Activated CD8-positive, alpha-beta T cell treated with anti-CD3 and anti-CD28 coated beads for 36 hours (primary cell): ENCODE measurements at regions of chr16 and their contacts with region 1.

Region 1: DNA sequence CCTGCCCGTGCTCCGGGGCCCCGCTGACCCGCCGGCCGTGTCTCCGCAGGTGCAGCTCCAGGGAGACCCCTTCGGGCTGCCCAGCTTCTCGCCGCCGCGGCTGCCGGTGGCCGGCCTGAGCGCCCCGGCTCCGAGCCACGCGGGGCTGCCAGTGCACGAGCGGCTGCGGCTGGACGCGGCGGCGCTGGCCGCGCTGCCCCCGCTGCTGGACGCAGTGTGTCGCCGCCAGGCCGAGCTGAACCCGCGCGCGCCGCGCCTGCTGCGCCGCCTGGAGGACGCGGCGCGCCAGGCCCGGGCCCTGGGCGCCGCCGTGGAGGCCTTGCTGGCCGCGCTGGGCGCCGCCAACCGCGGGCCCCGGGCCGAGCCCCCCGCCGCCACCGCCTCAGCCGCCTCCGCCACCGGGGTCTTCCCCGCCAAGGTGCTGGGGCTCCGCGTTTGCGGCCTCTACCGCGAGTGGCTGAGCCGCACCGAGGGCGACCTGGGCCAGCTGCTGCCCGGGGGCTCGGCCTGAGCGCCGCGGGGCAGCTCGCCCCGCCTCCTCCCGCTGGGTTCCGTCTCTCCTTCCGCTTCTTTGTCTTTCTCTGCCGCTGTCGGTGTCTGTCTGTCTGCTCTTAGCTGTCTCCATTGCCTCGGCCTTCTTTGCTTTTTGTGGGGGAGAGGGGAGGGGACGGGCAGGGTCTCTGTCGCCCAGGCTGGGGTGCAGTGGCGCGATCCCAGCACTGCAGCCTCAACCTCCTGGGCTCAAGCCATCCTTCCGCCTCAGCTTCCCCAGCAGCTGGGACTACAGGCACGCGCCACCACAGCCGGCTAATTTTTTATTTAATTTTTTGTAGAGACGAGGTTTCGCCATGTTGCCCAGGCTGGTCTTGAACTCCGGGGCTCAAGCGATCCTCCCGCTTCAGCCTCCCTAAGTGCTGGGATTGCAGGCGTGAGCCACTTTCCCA is 5.9 kb downstream of the CTF1 start:
- DNase-seq: peak; percentile 62
- ATAC-seq: peak; percentile 77
- H3K4me3 Mint-ChIP-seq: peak overlapping the region; percentile 87
- H3K27ac Mint-ChIP-seq: peak overlapping the region; percentile 99
- H3K4me1 Mint-ChIP-seq: peaks cover 23% of the 10 kb centered on the region
- H3K27me3 Mint-ChIP-seq: no peaks in the 10 kb centered on the region
- CTCF ChIP-seq: peak; percentile 17

Region 2: GRCh38 chr16:30665161-30665829 is 237.0 kb before region 1 on chr16:
- CTCF ChIA-PET with region 1: no interaction called
- POLR2A ChIA-PET with region 1: no interaction called
- intact Hi-C with region 1: no loop called
- DNase-seq: no peak
- ATAC-seq: no peak
- H3K4me3 Mint-ChIP-seq: no peak overlapping the region
- H3K27ac Mint-ChIP-seq: peak overlapping the region; percentile 69
- H3K4me1 Mint-ChIP-seq: peaks cover 39% of the 10 kb centered on the region
- H3K27me3 Mint-ChIP-seq: no peaks in the 10 kb centered on the region
- CTCF ChIP-seq: no peak

Region 3: GRCh38 chr16:30805370-30806169 is 96.7 kb before region 1 on chr16:
- CTCF ChIA-PET with region 1: interaction called, 16 read pairs
- POLR2A ChIA-PET with region 1: interaction called, 14 read pairs
- intact Hi-C with region 1: no loop called
- DNase-seq: peak; percentile 53
- ATAC-seq: peak; percentile 63
- H3K4me3 Mint-ChIP-seq: peak overlapping the region; percentile 63
- H3K27ac Mint-ChIP-seq: peak overlapping the region; percentile 66
- H3K4me1 Mint-ChIP-seq: peaks cover 18% of the 10 kb centered on the region
- H3K27me3 Mint-ChIP-seq: peaks cover 3% of the 10 kb centered on the region
- CTCF ChIP-seq: no peak

Region 4: GRCh38 chr16:30838876-30839471 is 63.3 kb before region 1 on chr16:
- CTCF ChIA-PET with region 1: interaction called, 120 read pairs
- POLR2A ChIA-PET with region 1: no interaction called
- intact Hi-C with region 1: no loop called
- DNase-seq: no peak
- ATAC-seq: no peak
- H3K4me3 Mint-ChIP-seq: no peak overlapping the region
- H3K27ac Mint-ChIP-seq: no peak overlapping the region
- H3K4me1 Mint-ChIP-seq: no peaks in the 10 kb centered on the region
- H3K27me3 Mint-ChIP-seq: no peaks in the 10 kb centered on the region
- CTCF ChIP-seq: no peak

Region 5: DNA sequence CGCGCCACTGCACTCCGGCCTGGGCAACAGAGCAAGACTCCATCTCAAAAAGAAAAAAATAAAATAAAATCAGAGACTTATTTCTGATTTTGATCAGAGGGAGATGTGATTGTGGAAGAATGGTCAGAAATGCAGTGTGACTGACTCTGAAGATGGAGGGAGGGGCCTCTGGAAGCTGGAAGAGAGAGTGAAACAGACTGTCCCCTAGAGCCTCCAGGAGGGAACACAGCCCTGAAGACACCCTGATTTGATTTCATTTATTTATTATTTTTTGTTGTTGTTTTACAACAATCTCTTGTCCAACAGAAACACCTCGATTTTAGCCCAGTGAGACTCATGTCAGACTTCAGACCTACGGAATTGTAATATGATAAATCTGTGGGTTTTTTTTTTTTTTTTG is 34.6 kb before region 1 on chr16:
- CTCF ChIA-PET with region 1: interaction called, 15 read pairs
- POLR2A ChIA-PET with region 1: no interaction called
- intact Hi-C with region 1: no loop called
- DNase-seq: no peak
- ATAC-seq: peak; percentile 45
- H3K4me3 Mint-ChIP-seq: no peak overlapping the region
- H3K27ac Mint-ChIP-seq: no peak overlapping the region
- H3K4me1 Mint-ChIP-seq: peaks cover 8% of the 10 kb centered on the region
- H3K27me3 Mint-ChIP-seq: no peaks in the 10 kb centered on the region
- CTCF ChIP-seq: no peak

Region 6: GRCh38 chr16:30874821-30875717 is 27.2 kb before region 1 on chr16:
- CTCF ChIA-PET with region 1: interaction called, 22 read pairs
- POLR2A ChIA-PET with region 1: interaction called, 64 read pairs
- intact Hi-C with region 1: no loop called
- DNase-seq: peak; percentile 91
- ATAC-seq: peak; percentile 79
- H3K4me3 Mint-ChIP-seq: peak overlapping the region; percentile 98
- H3K27ac Mint-ChIP-seq: peak overlapping the region; percentile 99
- H3K4me1 Mint-ChIP-seq: peaks cover 34% of the 10 kb centered on the region
- H3K27me3 Mint-ChIP-seq: no peaks in the 10 kb centered on the region
- CTCF ChIP-seq: no peak

Region 7: GRCh38 chr16:30914830-30915229 is 12.5 kb after region 1 on chr16:
- CTCF ChIA-PET with region 1: interaction called, 13 read pairs
- POLR2A ChIA-PET with region 1: interaction called, 3 read pairs
- intact Hi-C with region 1: no loop called
- DNase-seq: no peak
- ATAC-seq: no peak
- H3K4me3 Mint-ChIP-seq: no peak overlapping the region
- H3K27ac Mint-ChIP-seq: no peak overlapping the region
- H3K4me1 Mint-ChIP-seq: no peaks in the 10 kb centered on the region
- H3K27me3 Mint-ChIP-seq: no peaks in the 10 kb centered on the region
- CTCF ChIP-seq: no peak